PC-3 (cell line): ENCODE measurements at regions of chr16 and their contacts with region 1.

Region 1: DNA sequence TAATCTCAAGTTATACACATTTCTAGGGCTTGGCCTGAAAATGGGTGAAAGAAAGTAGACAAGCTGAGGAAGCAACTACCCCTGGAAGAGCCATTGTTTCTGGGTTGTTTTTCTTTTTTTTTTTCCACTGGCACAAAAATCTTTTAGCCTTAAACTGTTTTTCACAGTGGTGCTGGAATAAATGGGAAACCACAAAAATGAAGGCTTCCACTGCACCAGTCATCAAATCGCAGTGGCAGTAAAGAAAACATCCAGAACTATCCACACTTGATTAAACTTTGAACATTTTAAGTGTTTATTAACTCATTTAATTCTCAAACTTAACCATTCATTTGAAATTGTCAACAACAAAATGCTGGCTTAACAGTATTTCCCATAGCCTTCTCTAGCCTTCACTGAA is 14.3 kb downstream of the CMTM4 start:
- DNase-seq: no peak
- ATAC-seq: no peak
- H3K4me3 ChIP-seq: no peak overlapping the region
- H3K27ac ChIP-seq: no peak overlapping the region
- H3K4me1 ChIP-seq: peaks cover 11% of the 10 kb centered on the region
- H3K27me3 ChIP-seq: no peaks in the 10 kb centered on the region
- CTCF ChIP-seq: no peak

Region 2: GRCh38 chr16:66622863-66623262 is 59.4 kb before region 1 on chr16:
- CTCF ChIA-PET with region 1: no interaction called
- POLR2A ChIA-PET with region 1: interaction called, 11 read pairs
- intact Hi-C with region 1: no loop called
- DNase-seq: no peak
- ATAC-seq: no peak
- H3K4me3 ChIP-seq: no peak overlapping the region
- H3K27ac ChIP-seq: no peak overlapping the region
- H3K4me1 ChIP-seq: peaks cover 18% of the 10 kb centered on the region
- H3K27me3 ChIP-seq: no peaks in the 10 kb centered on the region
- CTCF ChIP-seq: no peak